Mammary epithelial cell (primary cell): ENCODE measurements at regions of chr11 and their contacts with region 1.

Region 1: GRCh38 chr11:83193315-83194280 is at the start of gene ANKRD42:
- DNase-seq: peak; percentile 94
- H3K4me3 ChIP-seq: peak within 1 kb of the TSS; percentile 65 to 84 (median 82)
- H3K27ac ChIP-seq: peak within 1 kb of the TSS; percentile 92
- H3K4me1 ChIP-seq: peaks cover 25% of the 10 kb centered on the region
- H3K27me3 ChIP-seq: no peaks in the 10 kb centered on the region
- CTCF ChIP-seq: peak in 1 of 2 donors; percentile 2
- total RNA-seq, gene ANKRD42: 9.6 to 11.5 TPM

Region 2: GRCh38 chr11:83162377-83162776 is 31.2 kb before region 1 on chr11:
- CTCF ChIA-PET with region 1: interaction called, 3 read pairs
- dilution Hi-C with region 1: no loop called
- in situ Hi-C with region 1: no loop called
- intact Hi-C with region 1: loop called (anchors 2 kb)
- DNase-seq: no peak
- H3K4me3 ChIP-seq: no peak overlapping the region
- H3K27ac ChIP-seq: no peak overlapping the region
- H3K4me1 ChIP-seq: peaks cover 14% of the 10 kb centered on the region
- H3K27me3 ChIP-seq: no peaks in the 10 kb centered on the region
- CTCF ChIP-seq: no peak

Region 3: DNA sequence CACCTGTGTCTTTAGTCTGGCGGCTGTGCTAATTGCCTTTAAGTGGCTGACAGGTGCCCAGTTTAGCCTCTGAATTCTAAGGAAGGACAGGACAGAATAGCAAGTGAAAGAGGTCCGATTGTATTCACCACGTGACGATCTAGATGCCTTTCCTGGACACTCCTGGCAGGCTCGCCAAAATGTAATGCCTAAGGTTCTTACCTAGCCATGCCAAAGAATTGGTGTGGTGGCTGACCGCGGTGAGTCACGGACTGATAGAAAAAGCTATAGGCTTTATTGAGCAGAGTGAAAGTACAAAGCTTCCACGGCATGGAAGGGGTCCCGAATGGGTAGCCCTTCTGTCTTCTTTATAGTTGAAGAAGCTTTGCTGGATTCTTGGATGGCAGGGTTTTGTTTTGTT is 26.7 kb after region 1 on chr11:
- CTCF ChIA-PET with region 1: no interaction called
- dilution Hi-C with region 1: no loop called
- in situ Hi-C with region 1: no loop called
- intact Hi-C with region 1: loop called (anchors 1 kb)
- DNase-seq: no peak
- H3K4me3 ChIP-seq: peak overlapping the region in 1 of 3 experiments; percentile 3
- H3K27ac ChIP-seq: no peak overlapping the region
- H3K4me1 ChIP-seq: no peaks in the 10 kb centered on the region
- H3K27me3 ChIP-seq: no peaks in the 10 kb centered on the region
- CTCF ChIP-seq: no peak

Region 4: DNA sequence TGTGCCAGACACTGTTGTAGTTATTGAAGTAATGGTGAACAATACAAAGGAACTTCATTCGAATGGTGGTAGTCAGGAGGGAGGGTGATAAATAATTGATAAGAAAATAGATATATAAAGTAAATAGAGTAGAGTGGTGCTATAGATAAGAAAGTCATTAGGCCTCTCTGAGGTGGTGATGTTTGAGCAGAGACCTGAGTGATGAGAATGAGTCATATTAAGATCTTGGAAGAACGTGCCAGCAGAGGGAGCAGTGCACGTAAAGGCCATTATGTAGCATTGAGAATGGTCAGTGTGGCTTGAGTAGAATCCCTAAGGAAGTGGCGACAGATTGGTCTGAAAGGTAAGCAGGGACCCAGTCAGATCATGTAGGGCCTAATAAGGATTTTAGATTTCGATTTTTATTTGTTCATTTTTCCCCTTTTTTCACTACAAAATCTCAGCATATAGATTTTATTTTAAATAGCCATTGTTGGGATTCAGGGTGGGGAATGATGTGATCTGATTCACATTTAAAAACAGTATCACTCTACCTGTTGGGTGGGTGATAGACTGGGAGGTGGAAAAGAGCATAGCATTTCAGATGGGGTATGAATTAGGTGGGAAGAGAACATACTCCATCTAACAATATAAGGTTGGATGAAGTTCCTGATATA is 47.8 kb after region 1 on chr11:
- CTCF ChIA-PET with region 1: no interaction called
- dilution Hi-C with region 1: no loop called
- in situ Hi-C with region 1: no loop called
- intact Hi-C with region 1: loop called (anchors 5 kb)
- DNase-seq: peak; percentile 59
- H3K4me3 ChIP-seq: no peak overlapping the region
- H3K27ac ChIP-seq: no peak overlapping the region
- H3K4me1 ChIP-seq: no peaks in the 10 kb centered on the region
- H3K27me3 ChIP-seq: no peaks in the 10 kb centered on the region
- CTCF ChIP-seq: peak; percentile 65 to 74

Region 5: DNA sequence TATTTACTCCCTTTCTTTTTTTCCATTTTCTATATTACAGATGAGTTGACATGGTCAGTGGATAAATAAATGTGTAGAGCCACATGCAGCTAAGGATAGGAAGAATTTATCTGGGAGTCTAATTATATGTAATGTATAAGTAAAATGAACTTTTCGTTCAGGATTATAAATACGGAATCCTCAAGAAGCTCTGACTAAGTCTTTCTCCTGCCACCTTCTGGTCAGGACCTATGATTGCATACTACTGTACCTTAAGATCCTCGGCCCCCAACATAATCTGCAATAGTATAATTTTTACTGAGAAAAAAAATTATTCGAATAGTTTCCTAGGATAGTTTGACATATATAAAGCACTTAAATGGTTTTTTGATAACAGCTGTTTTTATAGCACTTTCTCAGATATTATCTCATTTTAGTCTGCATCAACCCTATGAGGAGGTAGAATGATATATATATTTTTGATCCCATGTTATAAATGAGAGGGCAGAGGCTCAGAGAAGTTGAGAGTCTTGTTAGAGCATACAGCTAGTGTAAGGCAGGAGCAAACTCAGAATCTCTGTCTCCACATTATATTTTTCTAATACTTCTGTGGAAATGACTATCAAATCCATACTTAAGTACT is 56.5 kb after region 1 on chr11:
- CTCF ChIA-PET with region 1: no interaction called
- dilution Hi-C with region 1: no loop called
- in situ Hi-C with region 1: no loop called
- intact Hi-C with region 1: loop called (anchors 2 kb)
- DNase-seq: peak; percentile 20
- H3K4me3 ChIP-seq: no peak overlapping the region
- H3K27ac ChIP-seq: no peak overlapping the region
- H3K4me1 ChIP-seq: no peaks in the 10 kb centered on the region
- H3K27me3 ChIP-seq: no peaks in the 10 kb centered on the region
- CTCF ChIP-seq: peak; percentile 62 to 69

Region 6: GRCh38 chr11:83285771-83286528 is 92.4 kb after region 1 on chr11 and contains the start of gene CCDC90B:
- CTCF ChIA-PET with region 1: no interaction called
- dilution Hi-C with region 1: no loop called
- in situ Hi-C with region 1: no loop called
- intact Hi-C with region 1: loop called (anchors 1 kb)
- DNase-seq: peak; percentile 96
- H3K4me3 ChIP-seq: peak within 1 kb of the TSS; percentile 77 to 92 (median 85)
- H3K27ac ChIP-seq: peak within 1 kb of the TSS; percentile 90
- H3K4me1 ChIP-seq: peaks cover 14% of the 10 kb centered on the region
- H3K27me3 ChIP-seq: no peaks in the 10 kb centered on the region
- CTCF ChIP-seq: peak; percentile 23 to 36
- total RNA-seq, gene CCDC90B: 45.3 to 56.3 TPM

Region 7: DNA sequence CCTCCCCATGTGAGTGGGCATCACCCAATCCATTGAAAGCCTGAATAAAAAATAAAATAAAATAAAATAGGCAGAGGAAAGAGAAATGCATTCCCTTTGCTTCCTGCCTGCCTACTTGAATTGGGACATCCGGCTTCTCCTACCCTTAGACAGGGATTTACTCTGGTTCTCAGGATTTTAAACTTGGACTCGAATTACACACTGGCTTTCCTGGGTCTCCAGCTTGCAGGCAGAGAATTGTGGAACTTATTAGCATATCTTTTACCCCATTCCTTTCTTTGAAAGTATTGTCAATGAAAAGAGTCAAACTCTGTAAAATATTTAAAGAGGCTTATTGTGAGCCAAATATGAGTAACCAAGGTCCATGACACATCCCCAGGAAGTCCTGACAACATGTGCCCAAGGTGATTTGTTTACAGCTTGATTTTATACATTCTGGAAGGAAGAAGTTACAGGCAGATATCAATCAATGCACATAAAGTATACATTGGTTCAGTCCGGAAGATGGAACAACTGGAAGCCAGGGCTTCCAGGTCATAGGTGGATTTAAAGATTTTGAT is 171.0 kb after region 1 on chr11:
- CTCF ChIA-PET with region 1: no interaction called
- dilution Hi-C with region 1: no loop called
- in situ Hi-C with region 1: no loop called
- intact Hi-C with region 1: no loop called
- DNase-seq: no peak
- H3K4me3 ChIP-seq: no peak overlapping the region
- H3K27ac ChIP-seq: no peak overlapping the region
- H3K4me1 ChIP-seq: no peaks in the 10 kb centered on the region
- H3K27me3 ChIP-seq: no peaks in the 10 kb centered on the region
- CTCF ChIP-seq: no peak